ENCODE measurements at regions of chr11 and their contacts with region 1.

Region 1: GRCh38 chr11:1890568-1891260 is 981 bp downstream of the PRR33 start:
- DNase-seq: no peak
- H3K4me3 ChIP-seq: peak overlapping the region; percentile 39
- H3K4me3 Mint-ChIP-seq: peak overlapping the region in 5 of 7 donors; percentile 17 to 82 (median 50)
- H3K27ac ChIP-seq: no peak overlapping the region
- H3K27ac Mint-ChIP-seq: peak overlapping the region in 3 of 8 donors; percentile 21 to 80 (median 36)
- H3K4me1 ChIP-seq: peaks cover 39% of the 10 kb centered on the region
- H3K4me1 Mint-ChIP-seq: peaks cover 27 to 65% (median 31%) of the 10 kb centered on the region in 3 donors
- H3K27me3 ChIP-seq: no peaks in the 10 kb centered on the region
- H3K27me3 Mint-ChIP-seq: no peaks in the 10 kb centered on the region

Region 2: DNA sequence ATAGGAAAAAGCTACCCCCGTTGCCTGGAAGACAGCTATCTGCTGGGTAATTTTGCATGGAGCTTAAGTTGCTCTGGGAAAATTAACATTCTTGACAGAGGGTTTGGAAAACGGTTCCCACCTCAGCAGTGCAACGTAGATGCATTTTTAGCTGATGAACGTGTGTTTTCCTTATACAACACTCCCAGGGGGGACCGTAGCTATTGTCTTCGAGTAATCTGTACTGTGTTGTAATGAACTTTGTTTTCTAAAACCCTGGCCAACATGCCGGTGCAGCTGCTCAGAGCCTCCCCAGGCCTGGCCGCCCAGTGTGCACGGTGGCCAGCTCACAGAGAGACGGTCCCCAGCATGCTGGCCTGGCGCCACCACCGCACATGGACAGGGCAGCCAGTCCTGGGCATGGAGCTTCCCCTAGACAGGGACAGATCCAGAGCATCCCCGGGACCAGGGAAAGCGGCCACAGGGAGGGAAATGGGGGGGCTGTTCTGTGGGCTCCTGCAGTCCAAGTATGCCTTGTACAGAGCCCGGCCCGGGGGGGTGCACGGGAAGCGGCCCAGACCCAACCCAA is 30.9 kb after region 1 on chr11:
- CTCF ChIA-PET with region 1: interaction called, 5 read pairs
- POLR2A ChIA-PET with region 1: interaction called, 10 read pairs
- DNase-seq: no peak
- H3K4me3 ChIP-seq: no peak overlapping the region
- H3K4me3 Mint-ChIP-seq: no peak overlapping the region
- H3K27ac ChIP-seq: no peak overlapping the region
- H3K27ac Mint-ChIP-seq: peak overlapping the region in 1 of 8 donors; percentile 20
- H3K4me1 ChIP-seq: no peaks in the 10 kb centered on the region
- H3K4me1 Mint-ChIP-seq: peaks cover 0 to 25% (median 11%) of the 10 kb centered on the region in 3 donors
- H3K27me3 ChIP-seq: no peaks in the 10 kb centered on the region
- H3K27me3 Mint-ChIP-seq: peaks cover 9 to 10% of the 10 kb centered on the region in 2 donors

Measured in CD8-positive, alpha-beta memory T cell (primary cell).